Endothelial cell of umbilical vein (primary cell): ENCODE measurements at regions of chr1 and their contacts with region 1.

Region 1: GRCh38 chr1:204363335-204364124 is 3.8 kb upstream of the PLEKHA6 start:
- DNase-seq: peak; percentile 83
- H3K4me3 ChIP-seq: peak overlapping the region in 2 of 3 experiments; percentile 30 to 35
- H3K27ac ChIP-seq: no peak overlapping the region
- H3K4me1 ChIP-seq: peaks cover 53% of the 10 kb centered on the region
- H3K27me3 ChIP-seq: no peaks in the 10 kb centered on the region
- CTCF ChIP-seq: peak; percentile 93 to 94
- POLR2A ChIP-seq: no peak

Region 2: DNA sequence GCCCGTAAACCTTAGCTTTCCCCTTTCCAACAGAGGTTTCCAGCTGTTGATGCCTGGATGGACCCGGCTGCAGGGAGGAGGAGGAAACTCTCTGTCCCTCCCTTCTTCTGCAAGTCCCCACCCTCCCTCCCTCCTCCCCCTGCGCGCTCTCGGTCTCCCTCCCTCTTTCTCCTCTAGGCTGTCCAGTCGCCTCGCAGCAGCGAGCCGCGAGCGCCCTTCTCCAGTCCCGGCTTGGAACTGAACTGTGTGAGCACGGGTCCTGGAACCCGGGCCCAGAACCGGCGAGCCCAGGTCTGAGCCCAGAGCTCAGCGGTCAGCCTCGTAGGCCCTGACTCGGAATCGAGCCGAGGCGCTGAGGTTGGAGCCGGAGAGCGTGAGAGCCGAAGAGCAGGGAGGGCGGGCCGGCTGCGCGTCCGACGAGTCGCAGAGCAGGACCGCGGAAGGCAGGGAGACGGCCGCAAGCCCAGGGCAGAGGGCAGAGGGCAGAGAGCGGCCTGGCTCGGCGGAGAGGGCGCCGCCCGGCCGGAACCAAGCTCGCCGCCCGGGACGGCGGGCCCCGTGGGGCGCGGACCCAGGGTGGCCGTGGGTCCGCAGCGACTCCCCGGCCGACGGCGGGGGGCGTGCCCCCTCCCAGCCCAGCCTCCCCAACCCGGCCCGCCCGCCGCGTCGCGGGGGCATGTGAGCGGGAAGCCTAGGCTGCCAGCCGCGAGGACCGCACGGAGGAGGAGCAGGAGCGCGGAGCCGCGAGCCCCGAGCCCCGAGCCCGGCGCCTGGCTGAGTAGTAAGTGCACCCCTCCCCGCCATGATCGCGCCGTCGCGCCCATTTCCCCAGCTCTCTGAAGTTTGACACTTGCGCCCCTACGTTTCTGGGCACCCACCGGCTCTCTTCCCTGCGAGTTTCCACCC is 290.3 kb before region 1 on chr1 and contains the start of gene SOX13:
- CTCF ChIA-PET with region 1: no interaction called
- POLR2A ChIA-PET with region 1: no interaction called
- dilution Hi-C with region 1: no loop called
- intact Hi-C with region 1: loop called (anchors 5 kb)
- DNase-seq: peak; percentile 86
- H3K4me3 ChIP-seq: peak within 1 kb of the TSS; percentile 42 to 73 (median 66)
- H3K27ac ChIP-seq: peak within 1 kb of the TSS; percentile 27
- H3K4me1 ChIP-seq: peaks cover 14% of the 10 kb centered on the region
- H3K27me3 ChIP-seq: no peaks in the 10 kb centered on the region
- CTCF ChIP-seq: peak in 1 of 2 donors; percentile 10
- POLR2A ChIP-seq: peak; percentile 94
- total RNA-seq, gene SOX13: 38.0 and 40.8 TPM in 2 replicates

Region 3: DNA sequence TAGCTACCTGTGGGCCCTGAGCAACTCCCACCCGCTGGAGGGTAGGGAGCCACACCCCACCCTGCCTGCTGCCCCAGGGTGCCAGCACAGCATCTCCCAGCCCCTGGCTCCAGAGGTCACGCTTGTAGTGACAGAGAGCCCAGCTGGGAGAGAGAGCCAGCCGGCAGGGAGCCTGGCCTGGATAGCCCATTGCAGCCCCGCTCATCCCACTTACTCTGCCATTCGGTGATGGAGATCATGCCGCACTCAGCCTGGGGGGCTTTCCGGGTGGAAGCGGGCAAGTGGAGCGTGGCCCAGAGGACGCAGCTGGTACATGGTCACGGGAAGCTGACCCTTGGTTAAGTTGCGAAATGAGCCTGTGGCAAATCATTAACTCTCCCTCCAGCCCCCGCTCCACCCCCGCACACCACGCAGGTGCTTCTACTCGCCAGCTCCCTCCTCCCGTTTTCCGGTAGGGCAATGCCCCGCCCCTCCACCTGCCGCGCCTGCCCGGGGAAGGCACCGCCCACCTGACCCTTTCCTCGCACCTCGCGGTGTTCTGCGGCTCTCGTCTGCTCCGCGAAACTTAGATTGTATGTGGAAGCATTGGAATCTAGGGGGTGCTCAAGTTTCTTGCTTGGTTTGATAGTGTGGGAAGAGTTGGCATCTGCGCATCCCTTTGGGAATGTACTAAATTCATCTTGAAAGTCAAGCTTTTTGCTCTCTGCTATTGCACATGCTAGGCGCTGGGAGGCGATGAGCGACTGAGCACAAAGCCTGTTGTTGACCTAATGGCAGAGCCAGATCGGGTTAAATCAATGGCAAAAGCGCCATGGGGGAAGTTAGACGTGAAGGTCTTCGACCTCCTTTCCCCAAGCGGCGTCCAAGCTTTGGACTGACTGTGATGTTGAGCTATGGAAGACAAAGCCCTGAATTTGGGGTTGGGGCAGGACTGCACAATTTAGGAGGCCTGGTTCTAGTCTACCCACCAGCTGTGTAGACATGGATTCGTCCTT is 149.6 kb before region 1 on chr1 and contains the start of gene GOLT1A:
- CTCF ChIA-PET with region 1: interaction called, 176 read pairs
- POLR2A ChIA-PET with region 1: no interaction called
- dilution Hi-C with region 1: no loop called
- intact Hi-C with region 1: loop called (anchors 1 kb)
- DNase-seq: peak; percentile 75
- H3K4me3 ChIP-seq: no peak within 1 kb of the TSS
- H3K27ac ChIP-seq: no peak within 1 kb of the TSS
- H3K4me1 ChIP-seq: no peaks in the 10 kb centered on the region
- H3K27me3 ChIP-seq: no peaks in the 10 kb centered on the region
- CTCF ChIP-seq: peak; percentile 75
- POLR2A ChIP-seq: no peak
- total RNA-seq, gene GOLT1A: not detected in 2 replicates

Region 4: DNA sequence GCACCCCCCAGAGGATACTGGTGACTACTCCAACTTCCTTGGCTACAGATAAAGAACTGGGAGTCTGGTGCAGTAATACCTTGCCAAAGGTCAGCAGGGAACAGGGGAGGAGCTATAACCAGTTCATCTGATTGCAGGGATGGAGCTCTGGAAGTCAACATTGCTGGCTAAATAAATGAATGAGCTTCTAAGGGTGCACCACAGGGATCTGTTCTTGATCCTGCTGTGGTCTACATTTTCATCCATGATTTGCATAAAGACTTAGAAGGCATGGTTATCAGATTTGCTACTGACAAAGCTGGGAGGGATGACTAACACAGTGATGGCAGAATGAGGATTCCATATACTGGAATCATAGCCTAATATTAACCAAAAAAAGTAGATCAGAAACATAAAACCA is 22.1 kb before region 1 on chr1:
- CTCF ChIA-PET with region 1: interaction called, 16 read pairs
- POLR2A ChIA-PET with region 1: no interaction called
- dilution Hi-C with region 1: no loop called
- intact Hi-C with region 1: no loop called
- DNase-seq: no peak
- H3K4me3 ChIP-seq: no peak overlapping the region
- H3K27ac ChIP-seq: no peak overlapping the region
- H3K4me1 ChIP-seq: peaks cover 11% of the 10 kb centered on the region
- H3K27me3 ChIP-seq: no peaks in the 10 kb centered on the region
- CTCF ChIP-seq: no peak
- POLR2A ChIP-seq: no peak

Region 5: GRCh38 chr1:204377795-204378608 is 14.5 kb after region 1 on chr1:
- CTCF ChIA-PET with region 1: interaction called, 25 read pairs
- POLR2A ChIA-PET with region 1: no interaction called
- dilution Hi-C with region 1: no loop called
- intact Hi-C with region 1: no loop called
- DNase-seq: peak; percentile 45
- H3K4me3 ChIP-seq: peak overlapping the region; percentile 47 to 68 (median 57)
- H3K27ac ChIP-seq: peak overlapping the region; percentile 33
- H3K4me1 ChIP-seq: peaks cover 21% of the 10 kb centered on the region
- H3K27me3 ChIP-seq: no peaks in the 10 kb centered on the region
- CTCF ChIP-seq: no peak
- POLR2A ChIP-seq: no peak